OCI-LY7 (cell line): ENCODE measurements at regions of chr9 and their contacts with region 1.

Region 1: DNA sequence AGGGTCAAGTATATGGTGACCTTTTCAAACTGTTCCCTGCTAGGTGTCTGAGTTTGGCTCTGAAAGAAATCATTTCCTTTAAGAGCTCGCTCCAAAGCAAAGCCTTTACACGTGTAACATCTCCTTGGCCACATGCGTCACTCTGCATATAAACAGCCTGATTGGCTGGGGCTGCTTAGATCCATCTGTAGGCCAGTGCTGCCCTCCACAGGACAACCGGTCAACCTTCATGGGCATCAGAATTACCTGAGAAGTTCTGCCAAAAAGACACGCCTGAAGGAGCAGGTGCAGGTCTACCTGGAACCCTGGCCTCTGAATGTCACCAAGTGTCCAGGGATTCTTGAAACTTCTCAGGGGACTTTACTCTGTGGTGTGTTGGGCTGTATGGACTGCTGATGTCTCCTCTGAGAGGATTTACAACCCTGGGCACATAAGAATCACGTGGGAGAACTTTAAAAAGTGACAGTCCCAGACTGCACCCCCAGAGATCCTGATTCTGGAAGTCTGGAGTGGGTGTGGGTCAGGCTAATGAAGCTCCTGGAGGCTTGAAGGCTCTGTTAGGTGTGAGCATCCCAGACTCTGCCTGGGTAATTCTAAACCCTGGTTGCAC is 497.6 kb downstream of the GADD45G start:
- DNase-seq: peak; percentile 86
- H3K4me3 ChIP-seq: no peak overlapping the region
- H3K27ac ChIP-seq: no peak overlapping the region
- H3K4me1 ChIP-seq: no peaks in the 10 kb centered on the region
- CTCF ChIP-seq: peak; percentile 86

Region 2: DNA sequence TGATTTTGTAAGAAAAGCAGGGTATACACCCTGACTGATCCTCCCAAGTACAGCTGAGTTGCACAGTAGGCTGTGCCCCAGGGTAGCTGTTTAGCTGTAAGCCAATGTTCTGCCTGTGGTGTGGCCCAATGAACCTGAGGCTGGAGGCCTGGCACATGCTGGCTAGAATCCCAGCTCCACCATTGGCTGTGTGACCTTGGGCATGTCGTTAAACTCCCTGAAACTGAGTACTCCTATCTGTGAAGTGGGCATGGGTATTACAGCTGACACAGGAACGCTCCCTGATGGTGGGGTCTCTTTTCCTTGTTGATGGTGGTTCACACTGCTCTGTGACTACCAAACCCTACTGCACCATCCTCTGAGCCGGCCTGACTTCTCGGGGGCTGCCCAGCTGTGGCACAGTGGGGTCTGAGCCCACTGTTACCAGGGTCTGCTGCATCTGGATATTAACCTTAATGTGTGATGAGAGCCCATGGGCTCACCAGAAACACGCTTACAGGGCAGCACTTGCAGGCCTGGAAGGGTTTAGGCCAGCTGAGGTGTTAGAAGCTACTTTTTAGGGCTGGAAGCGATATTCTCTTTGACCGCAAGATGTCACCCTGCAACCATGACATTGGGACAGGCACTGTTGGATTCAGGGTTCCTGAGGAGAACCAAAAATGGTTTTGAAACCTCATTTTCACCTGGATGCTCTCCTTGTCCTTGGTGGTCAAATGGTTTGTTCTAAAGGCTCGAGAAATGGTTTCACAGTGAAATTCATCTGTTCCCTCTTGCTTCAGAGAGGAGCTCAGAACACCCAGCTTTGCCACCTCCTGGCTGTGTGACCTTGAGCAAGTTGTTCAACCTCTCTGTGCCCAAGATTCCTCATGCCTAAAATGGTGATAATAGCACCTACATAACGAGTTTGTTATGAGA is 504.4 kb before region 1 on chr9:
- CTCF ChIA-PET with region 1: interaction called, 8 read pairs
- POLR2A ChIA-PET with region 1: no interaction called
- intact Hi-C with region 1: loop called (anchors 1 kb)
- DNase-seq: peak; percentile 68
- H3K4me3 ChIP-seq: no peak overlapping the region
- H3K27ac ChIP-seq: no peak overlapping the region
- H3K4me1 ChIP-seq: no peaks in the 10 kb centered on the region
- CTCF ChIP-seq: peak; percentile 97

Region 3: GRCh38 chr9:89919169-89919681 is 183.2 kb before region 1 on chr9:
- CTCF ChIA-PET with region 1: no interaction called
- POLR2A ChIA-PET with region 1: no interaction called
- intact Hi-C with region 1: loop called (anchors 10 kb)
- DNase-seq: peak; percentile 40
- H3K4me3 ChIP-seq: no peak overlapping the region
- H3K27ac ChIP-seq: no peak overlapping the region
- H3K4me1 ChIP-seq: no peaks in the 10 kb centered on the region
- CTCF ChIP-seq: peak; percentile 57

Region 4: GRCh38 chr9:90124961-90125360 is 22.6 kb after region 1 on chr9:
- CTCF ChIA-PET with region 1: no interaction called
- POLR2A ChIA-PET with region 1: no interaction called
- intact Hi-C with region 1: no loop called
- DNase-seq: no peak
- H3K4me3 ChIP-seq: no peak overlapping the region
- H3K27ac ChIP-seq: no peak overlapping the region
- H3K4me1 ChIP-seq: no peaks in the 10 kb centered on the region
- CTCF ChIP-seq: no peak

Region 5: DNA sequence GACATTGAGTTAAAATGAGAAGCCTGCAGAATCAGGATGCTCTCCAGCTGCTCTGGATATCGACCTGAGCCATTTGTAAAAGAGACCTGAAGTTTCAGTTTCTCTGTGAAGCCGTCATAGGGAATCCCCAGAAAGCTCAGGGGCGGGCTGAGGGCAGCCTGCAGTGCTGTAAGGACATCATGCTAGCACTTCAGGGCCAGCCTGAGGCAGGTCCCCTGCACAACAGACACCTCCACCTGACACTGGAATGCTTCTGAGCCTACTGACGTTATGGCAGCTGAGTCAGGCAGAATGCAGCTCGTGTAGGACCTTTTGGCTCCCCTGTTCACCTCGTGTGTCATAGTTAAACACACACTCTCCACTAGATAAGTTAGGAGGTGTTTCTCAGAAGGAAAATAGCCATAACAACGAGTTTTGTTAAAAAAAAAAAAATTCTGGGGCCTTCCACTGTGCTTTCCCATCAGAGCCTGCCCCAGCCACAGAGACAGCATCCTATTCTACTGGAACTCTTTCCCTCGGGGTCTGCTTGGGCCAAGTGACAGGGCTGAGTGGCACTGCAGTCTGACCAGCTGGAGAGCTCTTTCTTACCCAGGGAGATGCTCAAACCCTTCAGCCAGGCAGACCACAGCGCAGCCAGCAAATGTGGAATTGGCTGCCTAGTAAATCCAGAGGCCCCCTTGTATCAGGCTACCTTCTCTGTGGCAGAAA is 185.3 kb after region 1 on chr9:
- CTCF ChIA-PET with region 1: no interaction called
- POLR2A ChIA-PET with region 1: no interaction called
- intact Hi-C with region 1: no loop called
- DNase-seq: no peak
- H3K4me3 ChIP-seq: no peak overlapping the region
- H3K27ac ChIP-seq: no peak overlapping the region
- H3K4me1 ChIP-seq: no peaks in the 10 kb centered on the region
- CTCF ChIP-seq: no peak